GM10248 (cell line): ENCODE measurements at regions of chr4 and their contacts with region 1.

Region 1: DNA sequence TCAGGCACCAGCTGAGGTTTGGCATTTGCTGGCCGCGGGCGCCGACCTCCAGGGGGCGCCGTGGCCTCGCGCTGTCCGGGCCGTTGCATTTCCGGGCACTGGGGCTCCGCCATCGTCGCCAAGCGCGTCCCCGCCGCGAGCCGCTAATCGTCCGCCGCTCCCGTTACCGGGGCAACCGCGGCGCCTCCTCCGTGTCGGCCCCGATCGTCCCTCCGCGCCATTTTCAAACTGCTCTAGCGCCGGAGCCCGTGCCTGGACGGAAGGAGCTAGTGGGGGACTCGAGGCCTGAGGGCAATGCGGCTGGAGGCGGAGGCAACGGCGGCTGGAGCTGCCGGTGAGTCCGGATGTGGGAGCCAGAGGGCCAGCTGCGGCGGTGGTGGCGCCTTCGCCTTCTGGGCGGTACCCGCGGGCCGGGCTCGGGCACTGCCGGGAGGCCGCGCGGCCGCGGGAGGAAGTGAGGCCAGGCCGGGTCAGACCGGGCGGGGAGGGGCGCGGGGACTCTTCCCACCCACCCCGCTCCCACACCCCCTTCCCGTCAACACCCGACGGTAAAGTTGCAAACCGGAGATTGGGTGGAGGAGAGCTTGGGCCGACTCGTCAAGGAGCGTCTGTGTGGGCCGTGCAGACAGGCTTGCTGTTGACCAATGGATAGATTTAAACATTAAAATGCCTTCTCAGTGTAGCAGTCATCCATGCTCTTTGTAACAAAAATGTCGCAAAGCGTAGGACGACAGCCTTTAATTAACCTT is at the start of gene CEP135:
- DNase-seq: peak; percentile 92
- CTCF ChIP-seq: peak; percentile 91

Region 2: GRCh38 chr4:55838356-55838755 is 110.5 kb before region 1 on chr4:
- CTCF ChIA-PET with region 1: no interaction called
- POLR2A ChIA-PET with region 1: no interaction called
- DNase-seq: no peak
- CTCF ChIP-seq: no peak

Region 3: DNA sequence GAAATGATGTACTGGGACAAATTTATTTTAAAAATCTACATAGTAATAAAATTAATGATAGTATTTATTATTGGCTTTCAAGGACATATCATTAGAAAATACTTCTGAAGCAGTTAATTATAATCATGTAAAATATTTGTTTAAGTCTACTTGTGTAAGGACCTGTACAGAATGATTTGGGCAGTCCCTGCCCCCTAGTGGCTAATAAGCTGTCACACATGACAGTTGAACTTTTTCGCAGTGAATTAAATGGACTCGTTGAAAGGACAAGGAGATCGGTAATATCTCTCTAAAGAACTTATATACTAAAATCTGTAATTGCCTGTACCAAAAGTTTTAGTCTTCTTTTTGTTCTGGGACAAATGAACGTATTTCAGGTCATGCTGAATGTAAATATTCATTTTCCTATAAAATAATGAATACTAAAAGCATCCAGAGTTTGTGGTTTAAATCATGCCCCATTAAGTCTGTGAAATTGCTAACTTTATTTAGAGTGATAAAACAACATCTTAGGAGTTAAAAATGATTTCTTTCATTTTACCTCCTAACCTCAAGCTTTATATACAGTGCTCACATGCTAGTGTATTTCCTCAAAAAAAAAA is 81.8 kb before region 1 on chr4:
- CTCF ChIA-PET with region 1: interaction called, 22 read pairs
- POLR2A ChIA-PET with region 1: no interaction called
- DNase-seq: peak; percentile 22
- CTCF ChIP-seq: peak; percentile 80

Region 4: GRCh38 chr4:55965585-55965984 is 16.7 kb after region 1 on chr4:
- CTCF ChIA-PET with region 1: interaction called, 52 read pairs
- POLR2A ChIA-PET with region 1: no interaction called
- DNase-seq: no peak
- CTCF ChIP-seq: no peak

Region 5: DNA sequence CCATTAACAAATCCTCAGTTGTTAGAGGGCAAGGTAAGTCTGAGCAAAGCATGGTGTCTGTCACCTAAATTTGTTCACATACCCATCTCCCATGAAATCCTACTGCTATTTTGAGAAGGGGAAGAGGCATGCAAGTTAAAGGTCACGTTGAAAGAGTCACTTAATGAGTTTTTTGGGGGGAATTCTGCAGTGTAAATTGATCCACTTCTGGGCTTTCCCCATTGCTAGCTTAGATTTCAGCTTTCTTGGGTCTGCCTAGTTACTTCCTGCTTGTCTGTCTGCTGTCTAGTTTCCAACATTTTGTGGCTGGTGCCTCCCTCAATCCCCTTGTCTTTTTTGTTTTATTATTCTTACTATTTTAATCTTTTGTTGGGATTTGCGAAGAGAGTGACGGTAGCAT is 31.8 kb after region 1 on chr4:
- CTCF ChIA-PET with region 1: interaction called, 19 read pairs
- POLR2A ChIA-PET with region 1: interaction called, 3 read pairs
- DNase-seq: no peak
- CTCF ChIP-seq: no peak

Region 6: DNA sequence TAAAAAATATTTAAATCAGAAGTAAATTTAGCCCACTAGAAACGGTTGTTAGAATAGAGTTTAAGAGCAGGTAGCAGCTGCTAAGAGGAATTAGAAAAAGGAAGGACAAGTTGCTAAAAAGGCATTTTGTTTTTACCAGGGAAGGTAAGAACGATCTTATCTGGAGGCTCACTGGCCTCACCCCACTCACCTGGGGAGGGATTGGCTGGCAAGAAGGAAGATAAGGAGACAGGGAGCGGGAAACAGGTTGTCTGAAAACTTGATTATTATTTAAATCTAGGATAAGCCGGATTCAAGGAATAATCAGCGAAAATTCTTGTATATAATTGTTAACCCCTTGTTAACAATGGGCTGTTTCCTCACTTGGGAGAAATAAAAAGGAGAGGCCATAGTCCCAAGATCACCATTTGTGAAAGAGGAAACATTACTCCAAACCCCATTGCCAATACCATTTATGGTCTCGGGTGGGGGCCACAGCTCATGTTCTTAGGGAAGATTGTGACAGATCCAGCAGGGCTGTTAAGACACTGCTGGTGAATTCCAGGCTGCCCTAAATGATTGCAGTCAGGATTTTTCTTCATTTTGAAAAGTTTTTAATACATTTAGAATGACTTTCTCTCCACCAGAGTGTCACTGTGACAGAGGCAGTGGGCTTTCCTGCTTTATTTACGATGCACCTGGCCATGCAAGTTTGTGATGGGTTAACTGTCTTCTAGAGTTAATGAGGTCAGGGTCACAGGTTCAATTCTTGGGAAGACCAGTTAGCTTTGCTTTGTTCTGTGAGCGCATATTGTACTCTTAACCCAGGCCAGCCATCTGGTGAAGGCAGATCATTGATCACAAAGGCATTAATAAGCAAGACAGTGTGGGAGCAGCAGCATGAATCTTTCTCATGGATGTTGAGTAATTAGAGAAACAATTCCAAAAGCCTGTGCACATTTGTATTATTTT is 106.4 kb after region 1 on chr4:
- CTCF ChIA-PET with region 1: interaction called, 14 read pairs
- POLR2A ChIA-PET with region 1: no interaction called
- DNase-seq: no peak
- CTCF ChIP-seq: no peak